A549 (cell line): ENCODE measurements at regions of chr17 and their contacts with region 1.

Region 1: DNA sequence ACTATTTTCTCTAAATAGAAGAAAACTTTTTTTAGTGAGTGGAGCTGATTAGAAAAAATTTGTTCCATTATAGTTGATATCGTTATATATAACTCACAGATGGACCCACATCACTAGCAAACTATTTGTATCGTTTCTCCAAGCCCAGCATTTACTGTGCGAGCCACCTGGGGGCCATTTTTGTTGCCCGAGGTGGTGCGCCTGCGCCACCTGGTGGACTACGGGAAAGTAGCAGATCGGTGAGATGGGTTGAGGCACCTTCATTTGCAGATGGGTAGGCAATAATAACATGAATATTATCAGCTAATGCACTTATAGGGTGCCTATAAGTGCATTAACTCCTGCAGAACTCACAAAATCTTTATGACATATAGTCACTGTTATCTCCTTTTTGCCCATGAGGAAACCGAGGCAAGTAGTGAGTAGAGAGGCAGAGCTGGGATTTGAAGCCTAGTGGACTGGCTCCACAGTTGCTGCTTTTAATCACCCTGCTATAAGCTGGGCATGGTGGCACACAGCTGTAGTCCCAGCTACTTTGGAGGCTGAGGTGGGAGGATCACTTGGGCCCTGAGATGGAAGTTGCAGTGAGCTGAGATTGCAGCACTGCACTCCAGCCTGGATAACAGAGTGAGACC is 23.2 kb upstream of the NTN1 start:
- DNase-seq: peak; percentile 75 to 89
- ATAC-seq: peak; percentile 69 to 86
- H3K4me3 ChIP-seq: no peak overlapping the region
- H3K27ac ChIP-seq: no peak overlapping the region
- H3K4me1 ChIP-seq: no peaks in the 10 kb centered on the region
- CTCF ChIP-seq: peak; percentile 96
- EP300 ChIP-seq: no peak
- POLR2A ChIP-seq: no peak
- RAD21 ChIP-seq: peak; percentile 76 to 84

Region 2: DNA sequence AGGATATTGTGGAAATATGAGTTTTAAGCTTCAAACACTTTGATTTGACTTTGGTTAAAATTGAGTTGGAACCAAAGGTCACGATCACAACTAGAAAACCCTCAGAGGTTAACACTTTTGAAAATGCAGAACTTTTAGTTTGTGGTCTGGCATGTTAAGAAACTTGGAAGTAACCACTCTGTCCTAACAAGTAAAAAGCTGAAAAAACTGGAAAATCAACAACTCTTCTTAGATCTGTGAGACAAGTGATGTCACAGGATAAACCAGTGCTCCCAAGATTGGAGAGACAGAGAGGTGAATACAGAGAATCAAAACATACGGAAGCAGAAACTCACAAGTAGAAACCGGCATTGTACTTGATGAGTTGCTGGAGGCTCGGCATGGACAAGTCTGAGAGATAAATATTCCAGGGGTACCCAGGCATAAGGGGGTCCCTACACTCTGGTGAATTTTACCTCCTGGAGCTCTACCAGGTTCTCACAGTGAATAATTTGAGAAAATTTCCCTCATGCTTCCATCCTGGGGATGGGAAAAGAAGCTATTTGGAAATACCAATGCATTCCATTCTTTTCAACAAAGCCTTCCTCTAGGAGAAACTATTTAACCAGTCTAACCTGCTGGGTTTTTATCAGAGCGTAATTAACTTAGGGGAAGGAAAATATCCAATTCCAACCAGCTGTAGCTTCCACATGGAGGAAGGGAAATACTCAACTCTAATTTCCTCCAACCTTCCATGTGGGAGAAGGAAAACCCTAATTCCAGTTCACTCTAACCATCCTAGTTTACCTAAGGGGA is 216.1 kb before region 1 on chr17:
- CTCF ChIA-PET with region 1: no interaction called
- POLR2A ChIA-PET with region 1: no interaction called
- DNase-seq: no peak
- ATAC-seq: no peak
- H3K4me3 ChIP-seq: no peak overlapping the region
- H3K27ac ChIP-seq: no peak overlapping the region
- H3K4me1 ChIP-seq: no peaks in the 10 kb centered on the region
- CTCF ChIP-seq: no peak
- EP300 ChIP-seq: no peak
- POLR2A ChIP-seq: no peak
- RAD21 ChIP-seq: no peak

Region 3: DNA sequence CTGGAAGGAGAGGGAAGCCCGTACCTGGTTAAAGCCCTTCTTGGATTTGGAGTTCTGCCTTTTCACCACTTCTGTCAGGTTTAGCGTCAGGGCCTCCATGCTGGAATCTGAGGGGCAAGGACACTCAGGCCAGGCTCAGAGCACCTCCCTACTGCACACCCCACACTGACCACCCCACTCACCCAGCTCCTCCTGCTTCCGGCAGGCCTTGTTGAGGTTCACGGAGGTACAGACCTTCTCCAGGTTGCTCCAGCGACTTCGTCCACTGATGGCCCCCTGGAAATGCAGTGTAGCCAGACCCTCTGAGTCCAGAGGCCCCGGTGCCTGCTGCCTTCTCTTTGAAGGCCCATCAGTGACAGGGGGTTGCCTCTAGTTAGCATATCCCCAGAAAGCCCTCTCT is 116.5 kb before region 1 on chr17:
- CTCF ChIA-PET with region 1: interaction called, 158 read pairs
- POLR2A ChIA-PET with region 1: no interaction called
- DNase-seq: no peak
- ATAC-seq: no peak
- H3K4me3 ChIP-seq: no peak overlapping the region
- H3K27ac ChIP-seq: no peak overlapping the region
- H3K4me1 ChIP-seq: no peaks in the 10 kb centered on the region
- CTCF ChIP-seq: no peak
- EP300 ChIP-seq: no peak
- POLR2A ChIP-seq: no peak
- RAD21 ChIP-seq: no peak

Region 4: GRCh38 chr17:8894673-8895578 is 103.2 kb before region 1 on chr17:
- CTCF ChIA-PET with region 1: interaction called, 158 read pairs
- POLR2A ChIA-PET with region 1: no interaction called
- DNase-seq: peak; percentile 78 to 93
- ATAC-seq: peak; percentile 84 to 93
- H3K4me3 ChIP-seq: no peak overlapping the region
- H3K27ac ChIP-seq: no peak overlapping the region
- H3K4me1 ChIP-seq: no peaks in the 10 kb centered on the region
- CTCF ChIP-seq: peak; percentile 73
- EP300 ChIP-seq: no peak
- POLR2A ChIP-seq: no peak
- RAD21 ChIP-seq: peak; percentile 73 to 84

Region 5: DNA sequence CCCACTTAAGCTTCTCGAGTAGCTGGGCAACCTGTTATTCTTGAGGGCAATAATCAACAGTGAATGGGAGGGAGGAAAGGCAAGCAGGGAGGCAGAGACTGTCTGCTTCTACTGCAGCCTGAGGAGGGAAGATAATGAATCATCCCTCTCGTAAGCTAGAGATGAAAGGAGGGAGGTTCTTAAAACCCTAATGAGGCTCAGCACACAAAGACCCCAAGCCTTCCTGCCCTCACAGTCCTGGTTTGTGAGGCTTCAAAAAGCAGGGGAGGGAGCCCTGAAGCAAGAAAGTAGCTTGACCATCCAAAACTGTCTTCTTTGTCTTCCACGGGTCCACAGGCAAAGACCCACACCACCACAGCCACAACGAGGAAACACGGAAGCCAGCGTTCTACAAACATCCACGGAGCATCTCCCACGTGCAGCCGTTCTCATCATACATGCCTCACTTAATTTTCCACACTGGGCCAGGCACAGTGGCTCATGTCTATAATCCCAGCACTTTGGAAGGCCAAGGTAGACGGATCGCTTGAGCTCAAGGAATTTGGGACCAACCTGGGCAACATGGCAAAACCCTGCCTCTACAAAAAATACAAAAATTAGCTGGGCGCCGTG is 34.4 kb before region 1 on chr17:
- CTCF ChIA-PET with region 1: interaction called, 13 read pairs
- POLR2A ChIA-PET with region 1: no interaction called
- DNase-seq: no peak
- ATAC-seq: no peak
- H3K4me3 ChIP-seq: no peak overlapping the region
- H3K27ac ChIP-seq: no peak overlapping the region
- H3K4me1 ChIP-seq: no peaks in the 10 kb centered on the region
- CTCF ChIP-seq: no peak
- EP300 ChIP-seq: no peak
- POLR2A ChIP-seq: no peak
- RAD21 ChIP-seq: no peak

Region 6: DNA sequence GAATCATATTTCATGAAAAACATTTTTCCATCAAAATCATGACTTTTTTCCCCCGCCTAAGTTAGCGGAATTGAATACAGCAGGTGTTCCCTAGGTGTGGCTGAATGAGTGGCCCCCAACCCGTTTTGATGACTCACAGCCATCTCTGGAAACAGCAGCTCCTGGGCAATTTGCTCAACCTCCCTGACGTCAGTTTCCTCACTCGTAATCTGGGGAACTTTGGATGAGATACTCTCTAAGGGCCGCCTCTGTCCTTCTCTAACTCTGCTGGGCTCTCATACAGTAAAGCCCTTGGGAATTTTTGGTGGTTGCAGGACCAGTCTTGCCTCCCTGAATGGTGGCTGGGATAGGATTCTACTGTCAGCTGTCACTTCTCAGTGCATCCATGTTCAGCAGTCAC is 11.6 kb after region 1 on chr17:
- CTCF ChIA-PET with region 1: interaction called, 43 read pairs
- POLR2A ChIA-PET with region 1: interaction called, 3 read pairs
- DNase-seq: no peak
- ATAC-seq: peak; percentile 16 to 39; a peak in 3 of 6 replicates
- H3K4me3 ChIP-seq: no peak overlapping the region
- H3K27ac ChIP-seq: no peak overlapping the region
- H3K4me1 ChIP-seq: no peaks in the 10 kb centered on the region
- CTCF ChIP-seq: no peak
- EP300 ChIP-seq: no peak
- POLR2A ChIP-seq: no peak
- RAD21 ChIP-seq: no peak

Region 7: GRCh38 chr17:9512323-9513168 is 514.4 kb after region 1 on chr17:
- CTCF ChIA-PET with region 1: interaction called, 60 read pairs
- POLR2A ChIA-PET with region 1: no interaction called
- DNase-seq: peak in 1 of 2 experiments; percentile 17
- ATAC-seq: peak; percentile 56 to 62; a peak in 3 of 6 replicates
- H3K4me3 ChIP-seq: no peak overlapping the region
- H3K27ac ChIP-seq: peak overlapping the region in 1 of 2 experiments; percentile 27; a peak in 1 of 6 replicates
- H3K4me1 ChIP-seq: peaks cover 10% of the 10 kb centered on the region
- CTCF ChIP-seq: no peak
- EP300 ChIP-seq: no peak
- POLR2A ChIP-seq: no peak
- RAD21 ChIP-seq: no peak

Region 8: GRCh38 chr17:9531034-9531433 is 532.9 kb after region 1 on chr17:
- CTCF ChIA-PET with region 1: interaction called, 10 read pairs
- POLR2A ChIA-PET with region 1: no interaction called
- DNase-seq: no peak
- ATAC-seq: no peak
- H3K4me3 ChIP-seq: no peak overlapping the region
- H3K27ac ChIP-seq: no peak overlapping the region
- H3K4me1 ChIP-seq: no peaks in the 10 kb centered on the region
- CTCF ChIP-seq: no peak
- EP300 ChIP-seq: no peak
- POLR2A ChIP-seq: no peak
- RAD21 ChIP-seq: no peak